ENCODE measurements at regions of chr1 and their contacts with region 1.

Region 1: DNA sequence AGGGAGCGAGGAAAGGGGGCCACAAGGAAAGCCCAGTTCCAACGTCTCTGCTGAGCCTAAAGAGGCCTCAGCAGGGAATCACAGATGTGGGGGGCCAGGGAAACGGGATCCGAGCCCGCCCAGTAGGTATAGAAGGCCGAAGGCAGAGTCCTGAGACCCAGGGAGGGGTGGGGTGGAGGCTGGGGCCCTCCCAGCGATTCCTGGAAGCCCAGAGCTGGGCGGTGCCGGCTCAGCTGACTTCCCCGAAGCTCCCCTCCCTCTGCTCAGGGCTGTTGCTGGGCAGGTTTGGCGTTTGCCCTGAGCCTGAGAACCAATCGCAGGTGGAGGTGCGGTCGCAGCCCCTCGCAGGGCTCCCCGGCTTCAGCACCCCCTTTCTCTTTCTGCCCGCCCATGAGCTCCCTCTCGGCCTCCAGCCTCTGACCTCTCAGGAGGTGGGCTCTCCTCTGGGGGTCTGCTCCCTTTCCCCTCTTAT is 12.8 kb downstream of the ADAMTSL4 start:
- DNase-seq: peak; percentile 83
- H3K4me3 ChIP-seq: peak overlapping the region; percentile 74
- H3K27ac ChIP-seq: peak overlapping the region; percentile 99
- H3K4me1 ChIP-seq: peaks cover 72% of the 10 kb centered on the region
- CTCF ChIP-seq: no peak

Region 2: DNA sequence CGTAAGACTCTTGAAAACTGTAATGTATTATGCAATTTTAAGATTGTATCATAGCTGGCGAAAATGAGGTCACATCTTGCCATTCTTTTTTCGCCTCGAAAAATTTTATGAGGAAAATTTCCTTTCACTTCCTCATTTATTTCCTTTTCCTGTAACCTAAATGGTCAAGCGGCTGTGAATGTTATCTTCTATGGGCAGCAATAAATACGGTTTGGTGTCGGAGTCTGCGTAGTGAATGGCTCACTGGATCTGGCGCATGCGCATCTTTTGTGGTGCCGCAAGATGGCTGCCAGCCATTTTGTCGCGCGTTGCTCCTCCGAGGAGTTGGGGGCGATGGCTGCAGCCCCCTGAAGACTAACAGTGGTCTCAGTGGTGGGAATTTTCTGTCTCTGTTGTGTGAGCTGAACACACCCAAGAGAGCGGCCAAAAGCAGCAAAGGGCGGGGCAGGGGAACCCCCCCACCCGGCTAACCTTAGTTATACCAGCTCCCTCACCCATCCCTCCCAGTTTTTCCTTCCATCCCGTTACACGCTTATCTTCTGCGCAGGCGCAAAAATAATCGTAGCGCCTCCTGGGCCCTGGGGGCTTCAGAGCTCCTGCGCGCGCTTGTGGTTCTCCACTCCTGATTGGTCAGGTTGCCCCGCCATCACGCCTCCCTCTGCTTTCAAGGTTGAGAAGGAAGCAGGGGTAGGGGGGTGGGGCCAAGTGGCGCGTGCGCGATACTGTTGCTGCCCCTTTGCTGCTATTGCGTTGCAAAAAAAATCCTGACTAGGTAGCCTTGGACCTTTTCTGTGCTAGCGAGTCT is 198.4 kb before region 1 on chr1 and contains the start of gene RPRD2:
- CTCF ChIA-PET with region 1: no interaction called
- POLR2A ChIA-PET with region 1: no interaction called
- intact Hi-C with region 1: loop called (anchors 10 kb)
- DNase-seq: peak; percentile 100
- H3K4me3 ChIP-seq: peak within 1 kb of the TSS; percentile 92
- H3K27ac ChIP-seq: peak within 1 kb of the TSS; percentile 93
- H3K4me1 ChIP-seq: peaks cover 11% of the 10 kb centered on the region
- CTCF ChIP-seq: no peak
- total RNA-seq, gene RPRD2: 12.7 and 17.0 TPM in 2 replicates

Region 3: GRCh38 chr1:150376110-150376509 is 185.9 kb before region 1 on chr1:
- CTCF ChIA-PET with region 1: no interaction called
- POLR2A ChIA-PET with region 1: no interaction called
- intact Hi-C with region 1: no loop called
- DNase-seq: no peak
- H3K4me3 ChIP-seq: no peak overlapping the region
- H3K27ac ChIP-seq: no peak overlapping the region
- H3K4me1 ChIP-seq: peaks cover 4% of the 10 kb centered on the region
- CTCF ChIP-seq: no peak

Region 4: DNA sequence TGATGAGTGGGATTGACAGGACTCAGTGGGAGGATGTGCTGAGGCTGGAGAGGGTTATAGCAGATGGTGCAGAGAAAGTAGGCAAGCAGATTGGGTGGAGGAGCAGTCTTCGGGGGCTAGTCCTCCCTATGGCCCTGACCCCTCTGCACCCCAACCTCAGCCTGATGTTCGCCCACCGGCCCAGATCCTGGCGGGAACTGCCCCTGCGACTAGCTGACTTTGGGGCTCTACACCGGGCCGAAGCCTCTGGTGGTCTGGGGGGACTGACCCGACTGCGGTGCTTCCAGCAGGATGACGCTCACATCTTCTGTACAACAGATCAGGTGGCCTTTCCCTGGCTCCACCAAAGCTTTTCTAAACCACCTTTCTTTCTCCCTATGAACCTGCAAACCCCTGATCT is 63.7 kb before region 1 on chr1:
- CTCF ChIA-PET with region 1: no interaction called
- POLR2A ChIA-PET with region 1: no interaction called
- intact Hi-C with region 1: no loop called
- DNase-seq: no peak
- H3K4me3 ChIP-seq: no peak overlapping the region
- H3K27ac ChIP-seq: no peak overlapping the region
- H3K4me1 ChIP-seq: no peaks in the 10 kb centered on the region
- CTCF ChIP-seq: no peak

Region 5: GRCh38 chr1:150578965-150579798 is 17.2 kb after region 1 on chr1 and contains the start of gene MCL1:
- CTCF ChIA-PET with region 1: interaction called, 13 read pairs
- POLR2A ChIA-PET with region 1: interaction called, 260 read pairs
- intact Hi-C with region 1: loop called (anchors 1 kb)
- DNase-seq: peak; percentile 97
- H3K4me3 ChIP-seq: peak within 1 kb of the TSS; percentile 99
- H3K27ac ChIP-seq: peak within 1 kb of the TSS; percentile 85
- H3K4me1 ChIP-seq: peaks cover 45% of the 10 kb centered on the region
- CTCF ChIP-seq: peak; percentile 30; the same call in 1 of the 2 replicates
- total RNA-seq, gene MCL1: 102 and 125 TPM in 2 replicates

Region 6: GRCh38 chr1:150696590-150697524 is 134.8 kb after region 1 on chr1 and contains the start of gene GOLPH3L:
- CTCF ChIA-PET with region 1: no interaction called
- POLR2A ChIA-PET with region 1: interaction called, 5 read pairs
- intact Hi-C with region 1: loop called (anchors 2 kb)
- DNase-seq: peak; percentile 98
- H3K4me3 ChIP-seq: peak within 1 kb of the TSS; percentile 81
- H3K27ac ChIP-seq: peak within 1 kb of the TSS; percentile 27
- H3K4me1 ChIP-seq: peaks cover 19% of the 10 kb centered on the region
- CTCF ChIP-seq: no peak
- total RNA-seq, gene GOLPH3L: 6.2 and 13.2 TPM in 2 replicates

Region 7: GRCh38 chr1:150876119-150876454 is 314.1 kb after region 1 on chr1:
- CTCF ChIA-PET with region 1: no interaction called
- POLR2A ChIA-PET with region 1: no interaction called
- intact Hi-C with region 1: loop called (anchors 2 kb)
- DNase-seq: no peak
- H3K4me3 ChIP-seq: peak overlapping the region; percentile 89
- H3K27ac ChIP-seq: peak overlapping the region; percentile 65
- H3K4me1 ChIP-seq: peaks cover 23% of the 10 kb centered on the region
- CTCF ChIP-seq: no peak

Measured in OCI-LY7 (cell line).